Activated CD4-positive, alpha-beta memory T cell treated with anti-CD3 and anti-CD28 coated beads for 36 hours (primary cell): ENCODE measurements at regions of chr17 and their contacts with region 1.

Region 1: GRCh38 chr17:79844869-79845600 is 5.8 kb upstream of the CBX4 start:
- DNase-seq: peak; percentile 63
- H3K4me3 Mint-ChIP-seq: no peak overlapping the region
- H3K27ac Mint-ChIP-seq: no peak overlapping the region
- H3K4me1 Mint-ChIP-seq: peaks cover 21% of the 10 kb centered on the region
- H3K27me3 Mint-ChIP-seq: peaks cover 37% of the 10 kb centered on the region

Region 2: GRCh38 chr17:79874329-79874981 is 29.4 kb after region 1 on chr17:
- CTCF ChIA-PET with region 1: no interaction called
- POLR2A ChIA-PET with region 1: no interaction called
- intact Hi-C with region 1: no loop called
- DNase-seq: no peak
- H3K4me3 Mint-ChIP-seq: no peak overlapping the region
- H3K27ac Mint-ChIP-seq: no peak overlapping the region
- H3K4me1 Mint-ChIP-seq: peaks cover 4% of the 10 kb centered on the region
- H3K27me3 Mint-ChIP-seq: peaks cover 14% of the 10 kb centered on the region

Region 3: GRCh38 chr17:79991140-79991923 is 146.3 kb after region 1 on chr17:
- CTCF ChIA-PET with region 1: interaction called, 3 read pairs
- POLR2A ChIA-PET with region 1: interaction called, 3 read pairs
- intact Hi-C with region 1: loop called (anchors 1 kb)
- DNase-seq: peak; percentile 91
- H3K4me3 Mint-ChIP-seq: peak overlapping the region; percentile 71
- H3K27ac Mint-ChIP-seq: no peak overlapping the region
- H3K4me1 Mint-ChIP-seq: peaks cover 26% of the 10 kb centered on the region
- H3K27me3 Mint-ChIP-seq: no peaks in the 10 kb centered on the region